Calu3 (cell line): ENCODE measurements at regions of chr15 and their contacts with region 1.

Region 1: DNA sequence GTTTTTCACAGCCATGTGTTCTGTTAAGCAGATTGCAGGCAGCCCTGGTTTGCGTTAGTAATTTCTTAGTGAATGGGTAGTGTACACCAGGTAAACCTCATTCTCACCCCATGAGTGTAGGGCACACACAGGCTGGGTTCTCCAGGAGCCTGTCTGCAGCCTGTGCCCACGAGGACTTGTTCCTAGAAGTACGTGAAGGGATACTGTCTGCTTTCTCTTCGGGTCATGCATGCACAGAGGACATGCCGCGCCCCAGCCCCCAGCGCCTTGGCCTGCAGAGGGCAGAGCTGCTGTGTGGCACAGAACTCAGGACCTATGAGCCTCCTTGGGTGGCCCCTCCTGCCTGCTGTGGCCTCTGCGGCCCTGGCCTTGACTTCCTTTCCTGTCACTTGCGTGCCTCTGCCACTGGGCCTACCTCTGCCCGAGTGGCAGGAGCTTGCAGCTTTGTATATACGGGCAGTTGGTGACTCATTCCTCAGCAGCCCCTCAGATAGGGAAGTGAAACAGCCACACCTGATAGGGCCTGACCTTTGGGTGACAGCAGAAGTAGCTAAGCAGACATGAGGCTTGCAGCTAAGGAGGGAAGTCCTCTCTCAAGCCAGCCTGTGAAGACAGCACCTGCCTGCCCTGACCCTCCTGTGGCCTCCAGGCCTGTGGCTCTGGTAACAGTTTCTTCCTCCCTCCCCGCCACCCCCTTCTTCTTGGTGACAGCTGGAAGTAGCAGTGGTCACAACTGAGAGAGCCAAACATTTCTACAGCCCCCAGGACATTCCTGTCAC is 19.5 kb downstream of the PPCDC start:
- DNase-seq: peak; percentile 96
- H3K4me3 Mint-ChIP-seq: peak overlapping the region; percentile 13
- H3K27ac Mint-ChIP-seq: peak overlapping the region; percentile 94
- H3K4me1 Mint-ChIP-seq: peaks cover 88% of the 10 kb centered on the region
- H3K27me3 Mint-ChIP-seq: no peaks in the 10 kb centered on the region
- CTCF ChIP-seq: peak; percentile 72

Region 2: GRCh38 chr15:75029378-75030022 is 13.4 kb before region 1 on chr15:
- CTCF ChIA-PET with region 1: interaction called, 10 read pairs
- intact Hi-C with region 1: no loop called
- DNase-seq: peak; percentile 95
- H3K4me3 Mint-ChIP-seq: no peak overlapping the region
- H3K27ac Mint-ChIP-seq: no peak overlapping the region
- H3K4me1 Mint-ChIP-seq: peaks cover 45% of the 10 kb centered on the region
- H3K27me3 Mint-ChIP-seq: no peaks in the 10 kb centered on the region
- CTCF ChIP-seq: peak; percentile 97

Region 3: DNA sequence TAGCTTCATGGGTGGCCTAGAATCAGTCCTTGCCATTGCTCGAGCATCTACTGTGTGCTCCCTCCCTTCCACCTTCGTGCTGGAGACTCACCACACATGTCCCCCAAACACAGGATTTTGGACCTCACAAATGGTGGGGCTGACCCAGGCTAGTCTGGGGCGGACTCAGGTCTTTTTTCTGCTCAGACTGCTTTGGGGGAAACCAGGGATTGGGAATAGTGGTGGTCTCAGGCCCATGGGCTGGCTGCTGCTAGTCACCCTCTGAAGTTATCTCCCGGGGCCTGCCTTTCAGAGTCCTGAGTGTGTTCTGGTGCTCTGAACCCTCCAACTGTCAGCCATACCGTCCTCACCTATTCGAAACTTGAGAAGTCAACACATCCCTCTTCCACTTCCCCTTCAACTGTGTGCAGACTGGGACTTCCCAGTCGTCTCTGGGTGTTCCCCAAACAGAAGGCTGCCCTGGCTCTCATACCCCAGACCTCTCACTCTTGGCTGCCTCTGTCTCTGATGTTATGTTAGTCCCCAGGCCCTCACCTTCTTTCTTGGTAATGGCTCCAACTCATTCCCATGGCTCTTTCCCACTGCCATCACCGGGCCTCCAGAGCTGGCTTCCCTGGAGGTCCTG is 26.5 kb after region 1 on chr15:
- CTCF ChIA-PET with region 1: interaction called, 38 read pairs
- intact Hi-C with region 1: no loop called
- DNase-seq: no peak
- H3K4me3 Mint-ChIP-seq: no peak overlapping the region
- H3K27ac Mint-ChIP-seq: no peak overlapping the region
- H3K4me1 Mint-ChIP-seq: peaks cover 41% of the 10 kb centered on the region
- H3K27me3 Mint-ChIP-seq: no peaks in the 10 kb centered on the region
- CTCF ChIP-seq: no peak

Region 4: DNA sequence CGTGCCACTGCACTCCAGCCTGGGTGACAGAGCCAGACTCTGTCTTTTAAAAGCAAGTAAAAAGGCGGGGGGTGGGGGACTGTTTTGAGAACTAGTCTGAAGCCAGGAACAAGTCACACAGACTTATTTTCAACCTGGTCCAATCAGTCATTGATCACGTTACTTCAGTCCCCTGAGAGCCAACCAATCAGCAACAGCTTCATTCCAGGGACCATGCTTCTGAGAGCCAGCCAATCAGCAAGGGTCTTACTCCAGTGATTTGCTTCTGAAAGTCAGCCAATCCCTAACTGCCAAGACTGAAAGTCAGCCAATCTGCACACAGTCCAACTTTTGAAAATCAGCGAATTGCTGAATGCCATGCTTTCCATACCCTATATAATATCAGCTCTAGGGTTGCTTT is 110.2 kb after region 1 on chr15:
- CTCF ChIA-PET with region 1: interaction called, 19 read pairs
- intact Hi-C with region 1: no loop called
- DNase-seq: no peak
- H3K4me3 Mint-ChIP-seq: no peak overlapping the region
- H3K27ac Mint-ChIP-seq: no peak overlapping the region
- H3K4me1 Mint-ChIP-seq: peaks cover 23% of the 10 kb centered on the region
- H3K27me3 Mint-ChIP-seq: no peaks in the 10 kb centered on the region
- CTCF ChIP-seq: no peak

Region 5: DNA sequence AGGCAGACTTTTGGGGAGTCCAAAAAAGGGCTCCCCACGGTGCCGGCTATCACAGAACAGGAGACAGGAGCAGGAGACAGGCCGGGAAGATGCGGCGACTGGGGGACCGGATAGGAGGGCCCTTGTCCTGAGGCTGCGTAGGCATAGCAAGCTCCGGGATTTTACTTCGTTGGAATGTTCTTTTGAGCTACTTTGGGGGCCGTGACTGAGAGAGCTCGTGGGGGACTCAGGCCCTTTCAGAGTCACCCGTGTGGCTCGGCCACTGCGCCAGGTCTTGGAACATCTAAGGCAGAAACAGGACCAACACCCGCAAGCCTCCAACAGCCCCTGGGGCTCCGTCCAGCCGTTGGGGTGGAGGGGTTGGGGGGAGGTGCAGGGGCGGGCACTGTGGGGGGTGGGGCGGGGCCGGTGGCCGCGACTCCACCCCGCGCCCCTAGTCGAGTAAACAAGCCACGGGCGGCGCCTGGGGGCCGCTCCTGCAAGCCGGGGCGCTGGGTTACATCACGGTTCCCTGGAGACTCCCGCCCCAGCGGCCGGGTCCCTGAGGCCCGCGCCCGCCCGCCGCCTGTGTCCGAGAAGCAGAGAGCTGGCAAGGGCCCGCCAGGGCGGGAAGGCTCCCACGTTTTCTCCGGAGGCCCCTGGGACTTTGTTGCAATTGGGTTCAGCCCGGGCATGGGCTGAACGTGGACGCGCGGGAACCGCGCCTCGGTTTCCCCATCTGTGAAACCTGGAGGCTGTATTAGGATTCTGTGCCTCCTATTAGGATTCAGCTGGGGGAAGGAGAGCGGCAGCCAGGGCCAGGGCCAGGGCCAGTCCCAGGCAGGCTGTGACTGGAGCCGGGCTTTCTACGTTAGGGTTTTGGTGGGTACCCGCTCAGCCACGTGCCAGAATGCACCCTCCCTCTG is 135.5 kb after region 1 on chr15:
- CTCF ChIA-PET with region 1: interaction called, 20 read pairs
- intact Hi-C with region 1: no loop called
- DNase-seq: no peak
- H3K4me3 Mint-ChIP-seq: no peak overlapping the region
- H3K27ac Mint-ChIP-seq: no peak overlapping the region
- H3K4me1 Mint-ChIP-seq: peaks cover 61% of the 10 kb centered on the region
- H3K27me3 Mint-ChIP-seq: no peaks in the 10 kb centered on the region
- CTCF ChIP-seq: no peak

Region 6: DNA sequence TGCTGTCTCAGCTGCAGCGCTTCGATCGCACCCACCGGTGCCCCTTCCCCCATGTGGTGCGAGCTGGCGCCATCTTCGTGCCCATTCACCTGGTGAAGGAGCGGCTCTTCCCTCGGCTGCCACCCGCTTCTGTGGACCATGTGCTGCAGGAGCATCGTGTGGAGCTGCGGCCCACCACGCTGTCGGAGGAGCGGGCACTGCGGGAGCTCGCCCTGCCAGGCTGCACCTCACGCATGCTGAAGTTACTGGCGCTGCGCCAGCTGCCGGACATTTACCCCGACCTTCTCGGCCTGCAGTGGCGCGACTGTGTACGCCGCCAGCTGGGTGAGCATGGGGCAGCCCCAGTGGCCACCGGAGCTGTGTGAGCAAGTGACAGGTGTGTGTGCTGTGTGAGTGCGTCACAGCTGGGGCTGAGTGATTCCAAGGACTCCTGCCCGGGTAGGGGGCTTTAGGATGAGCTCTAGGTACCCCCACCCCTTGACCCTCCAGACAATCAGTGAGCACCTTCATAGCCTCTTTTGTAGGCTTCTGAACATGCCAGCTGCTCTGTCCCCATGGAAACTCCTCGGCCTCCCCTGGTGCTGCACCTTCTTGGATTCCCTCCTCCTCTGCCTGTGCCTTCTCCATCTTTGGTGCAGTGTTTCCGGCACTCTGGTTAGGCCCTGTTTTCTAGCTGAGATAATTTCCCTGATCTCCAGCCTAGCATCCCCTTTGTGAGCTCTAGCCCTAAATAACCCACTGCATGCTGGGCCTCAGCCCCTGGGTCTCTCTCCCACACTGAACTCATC is 165.8 kb after region 1 on chr15:
- CTCF ChIA-PET with region 1: interaction called, 119 read pairs
- intact Hi-C with region 1: loop called (anchors 1 kb)
- DNase-seq: no peak
- H3K4me3 Mint-ChIP-seq: peak overlapping the region; percentile 6
- H3K27ac Mint-ChIP-seq: peak overlapping the region; percentile 37
- H3K4me1 Mint-ChIP-seq: peaks cover 46% of the 10 kb centered on the region
- H3K27me3 Mint-ChIP-seq: no peaks in the 10 kb centered on the region
- CTCF ChIP-seq: no peak